Left cardiac atrium (tissue), 4 donors: ENCODE measurements at regions of chr6 and their contacts with region 1.

Region 1: GRCh38 chr6:44074439-44075136 is 52.7 kb downstream of the MRPL14 start:
- DNase-seq: peak; percentile 84
- ATAC-seq: peak; percentile 70 to 71

Region 2: DNA sequence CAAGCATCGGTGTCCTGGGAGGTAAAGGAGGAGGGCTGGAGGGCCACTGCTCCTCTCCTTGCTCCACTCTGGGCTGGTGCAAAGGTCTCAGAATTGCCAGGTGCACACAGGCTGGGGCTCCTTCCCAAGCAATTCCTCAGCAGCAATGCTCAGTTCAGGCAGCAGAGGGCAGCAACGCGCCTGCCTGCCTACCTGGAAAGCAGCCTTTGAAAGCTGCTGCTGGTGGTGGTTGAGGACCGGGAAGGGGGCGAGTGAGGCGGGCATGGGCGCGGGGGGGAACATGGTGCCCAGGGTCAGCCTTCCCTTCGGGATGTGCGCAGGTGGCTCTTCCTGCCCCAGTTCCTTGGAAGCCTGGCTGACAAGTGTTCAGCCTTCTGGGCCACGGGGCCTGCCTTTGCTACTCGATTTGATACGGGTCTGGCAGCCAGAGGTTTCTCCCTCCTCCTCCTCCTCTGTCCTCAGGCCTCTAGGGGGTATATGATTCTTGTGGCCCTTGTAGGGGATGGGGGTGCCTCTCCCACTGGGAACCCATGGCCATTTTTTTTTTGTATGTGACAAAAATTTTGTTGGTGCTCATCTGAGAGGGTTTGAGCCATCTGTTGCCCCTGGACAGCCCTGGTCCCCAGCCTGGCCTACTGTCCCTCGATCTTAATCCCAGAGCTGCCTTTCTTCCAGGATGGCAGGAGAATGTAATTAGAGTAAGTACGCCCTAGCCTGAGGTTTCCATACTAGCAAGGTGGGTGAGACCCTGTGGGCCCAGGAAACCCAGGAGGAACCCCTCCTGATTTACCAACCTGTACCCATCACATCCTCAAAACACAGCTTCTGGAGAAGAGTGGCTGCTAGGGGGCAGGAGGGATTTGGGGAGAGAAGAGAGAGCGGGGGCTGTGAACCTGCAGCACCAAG is 407.1 kb before region 1 on chr6:
- intact Hi-C with region 1: loop called in 1 of 2 experiments (anchors 2 kb)
- DNase-seq: peak; percentile 70
- ATAC-seq: peak; percentile 60

Region 3: DNA sequence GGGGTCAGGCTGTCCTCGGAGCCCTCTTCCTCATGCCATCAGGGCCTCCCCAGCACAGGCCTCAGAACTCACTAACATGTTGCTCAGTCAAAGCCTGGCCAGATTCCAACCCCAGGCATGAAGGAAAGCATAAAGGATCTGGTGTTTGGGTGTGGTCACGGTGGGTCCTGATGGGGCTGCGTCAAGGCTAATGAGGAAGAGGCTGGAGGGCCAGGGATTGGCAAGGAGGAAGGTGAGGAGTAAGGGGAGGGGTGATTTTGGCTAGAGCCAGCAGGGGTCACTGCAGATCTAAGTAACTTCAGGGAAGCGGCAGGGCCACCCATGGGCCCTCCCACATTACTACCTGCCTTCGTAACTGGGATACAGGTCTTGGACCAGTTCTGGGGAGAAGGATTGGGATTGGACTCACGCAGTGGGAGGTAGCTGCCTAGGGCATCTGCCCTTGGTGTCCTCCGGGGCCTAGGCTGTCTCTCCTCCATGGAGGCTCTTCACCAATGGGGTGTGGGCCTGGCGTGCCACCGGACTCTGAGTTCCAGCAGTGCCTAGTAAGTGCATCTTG is 350.8 kb before region 1 on chr6:
- intact Hi-C with region 1: loop called in 1 of 2 experiments (anchors 2 kb)
- DNase-seq: peak; percentile 62
- ATAC-seq: peak; percentile 80 to 85

Region 4: GRCh38 chr6:43769526-43770416 is 304.8 kb before region 1 on chr6 and contains the start of gene VEGFA:
- intact Hi-C with region 1: loop called (anchors 1 to 2 kb)
- DNase-seq: peak; percentile 92
- ATAC-seq: peak; percentile 70 to 77
- total RNA-seq, gene VEGFA: 168 to 212 TPM

Region 5: DNA sequence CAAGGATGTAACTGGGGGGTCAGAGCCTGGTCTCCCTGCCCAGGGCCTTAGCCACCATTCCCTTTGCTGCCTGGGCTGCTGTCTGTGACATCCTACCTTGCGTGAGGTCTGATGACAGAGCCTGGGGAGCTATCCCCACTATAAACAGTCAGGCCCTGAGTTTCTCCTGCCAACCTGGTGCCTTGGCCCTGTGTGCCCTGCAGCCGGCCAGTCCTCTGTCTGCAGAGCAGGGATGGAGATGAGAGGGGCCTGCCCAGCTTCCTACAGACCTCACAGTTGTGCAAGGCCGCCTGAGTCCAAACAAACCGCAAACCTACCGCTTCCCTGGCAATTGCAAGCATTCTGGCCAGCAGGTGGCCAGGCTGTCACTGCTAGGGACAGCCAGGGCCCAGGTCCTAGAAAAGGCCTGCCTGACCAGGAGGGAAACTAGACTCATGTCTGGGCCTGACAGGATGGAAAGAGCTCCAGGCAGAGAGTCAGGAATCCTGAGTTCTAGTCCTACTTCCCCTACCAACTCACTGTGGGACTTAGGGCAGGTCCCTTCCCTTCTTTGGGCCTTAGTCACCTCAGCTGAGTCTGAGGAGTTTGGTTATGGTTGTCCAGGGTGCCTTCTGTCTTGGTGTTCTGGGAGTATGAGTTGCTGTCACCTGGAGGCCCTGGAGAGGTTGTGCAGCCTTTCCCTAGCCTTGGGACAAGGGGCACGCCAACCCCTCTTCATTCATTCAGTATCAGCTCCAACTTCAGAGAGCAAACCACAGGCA is 218.4 kb before region 1 on chr6:
- intact Hi-C with region 1: loop called in 1 of 2 experiments (anchors 10 kb)
- DNase-seq: peak; percentile 36
- ATAC-seq: peak; percentile 40 to 48

Region 6: DNA sequence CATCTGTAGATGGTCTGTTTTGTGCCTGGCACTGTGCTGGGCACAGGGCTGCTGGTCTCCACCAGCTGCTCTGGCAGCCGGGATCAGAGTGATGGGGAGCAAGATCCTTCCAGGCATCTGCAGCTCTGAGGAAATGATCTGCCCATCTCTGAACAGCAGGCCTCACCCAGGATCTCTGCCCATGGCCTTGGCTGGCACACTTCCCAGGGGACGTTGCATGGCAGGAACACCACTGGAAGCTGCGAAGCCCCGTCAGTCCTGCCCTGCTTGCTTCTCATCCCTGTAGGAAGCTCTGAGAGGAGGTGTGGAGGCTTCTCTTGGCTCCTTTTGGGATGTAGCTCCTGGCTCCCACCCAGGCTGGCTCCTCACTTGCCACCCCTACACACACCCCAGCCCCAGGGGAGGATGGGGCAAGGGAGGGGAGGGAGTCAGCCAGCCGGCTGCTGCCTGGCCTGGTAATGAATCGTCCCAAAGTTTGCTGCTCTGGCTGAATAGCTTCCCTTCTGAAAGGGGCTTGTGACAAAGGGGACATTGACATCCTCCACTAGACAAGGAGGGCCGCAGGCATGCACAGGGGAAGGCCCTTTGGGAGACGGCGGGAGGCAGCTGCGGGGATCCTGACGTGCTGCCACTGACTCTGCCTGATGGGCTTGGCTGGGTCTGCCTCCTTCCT is 195.6 kb before region 1 on chr6:
- intact Hi-C with region 1: no loop called
- DNase-seq: peak; percentile 49
- ATAC-seq: peak; percentile 55 to 73

Region 7: DNA sequence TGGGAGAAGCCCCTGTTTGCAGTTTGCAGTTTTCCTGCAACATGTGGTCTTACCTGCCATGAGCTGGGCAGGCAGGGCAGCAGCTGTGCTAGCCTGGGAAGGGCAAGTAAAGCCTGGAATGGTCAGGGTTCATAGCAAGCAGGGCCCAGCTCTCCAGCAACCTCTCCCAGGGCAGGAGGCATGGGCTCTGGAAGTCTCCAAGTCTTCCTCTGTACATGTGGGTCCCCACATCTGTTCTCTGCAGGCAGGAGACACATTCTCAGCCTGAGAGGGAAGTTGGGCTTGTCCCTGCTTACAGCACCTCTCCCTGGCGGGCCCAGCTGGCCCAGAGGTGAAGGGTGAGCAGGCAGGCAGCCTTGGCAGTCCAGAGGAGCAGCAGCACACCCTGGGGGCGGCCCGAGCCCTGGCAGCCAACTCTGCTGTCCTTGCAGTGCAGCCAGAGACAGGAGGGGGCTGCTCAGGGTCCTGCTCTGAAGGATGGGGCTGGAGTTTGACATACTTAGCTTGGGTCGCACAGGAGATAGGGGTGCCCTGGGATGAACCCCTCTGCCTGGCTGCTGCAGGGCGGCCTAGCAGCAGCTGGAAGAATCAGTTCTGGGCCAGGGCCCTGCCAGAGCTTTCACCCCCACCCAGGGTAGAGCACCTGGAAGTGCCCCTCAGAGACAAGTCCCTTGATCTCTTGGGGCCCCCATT is 123.4 kb before region 1 on chr6:
- intact Hi-C with region 1: loop called in 1 of 2 experiments (anchors 5 kb)
- DNase-seq: peak; percentile 58
- ATAC-seq: peak; percentile 72 to 76

Region 8: DNA sequence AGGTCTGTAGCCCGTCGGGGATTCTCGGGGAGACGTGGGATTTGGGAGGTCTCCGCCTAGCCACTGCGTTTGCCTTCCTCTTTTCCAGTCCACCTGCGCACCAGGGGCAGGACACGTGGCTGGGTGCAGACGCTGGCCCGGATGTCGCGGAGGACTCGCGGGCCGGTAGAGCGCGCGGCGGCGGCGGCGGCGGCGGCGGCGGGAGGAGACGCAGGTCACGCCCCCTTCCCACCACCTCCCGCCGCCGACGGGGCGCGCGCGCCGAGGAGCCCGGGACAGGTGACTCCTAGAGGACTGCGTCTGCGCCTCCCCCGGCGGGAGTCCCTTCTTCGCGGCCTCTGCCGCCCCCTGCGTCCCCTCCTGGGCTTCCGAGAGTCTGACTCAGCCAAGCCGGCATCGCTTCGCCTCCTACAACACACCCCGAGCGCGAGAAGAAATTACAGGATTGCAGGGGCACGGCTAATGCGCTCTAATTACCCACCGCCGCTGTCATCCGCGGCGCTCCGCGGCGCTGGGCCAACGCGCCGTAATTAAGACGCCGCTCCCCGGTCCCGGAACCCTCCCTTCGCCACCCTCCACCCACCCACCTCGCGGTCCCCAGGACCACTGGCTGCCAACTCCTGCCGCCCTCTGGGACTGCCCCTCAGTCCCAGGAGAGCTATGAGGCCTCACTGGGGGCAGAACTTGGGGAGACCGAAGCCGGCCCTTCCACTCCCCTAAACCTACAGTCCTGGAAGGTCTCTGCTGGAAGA is 71.8 kb before region 1 on chr6:
- intact Hi-C with region 1: loop called in 1 of 2 experiments (anchors 2 kb)
- DNase-seq: peak; percentile 57
- ATAC-seq: peak; percentile 54 to 69